ENCODE measurements at regions of chr6 and their contacts with region 1.

Region 1: GRCh38 chr6:110682460-110682853 is 132.8 kb downstream of the CDK19 start:
- DNase-seq: peak; percentile 87
- H3K4me3 Mint-ChIP-seq: no peak overlapping the region
- H3K27ac Mint-ChIP-seq: no peak overlapping the region
- H3K4me1 Mint-ChIP-seq: no peaks in the 10 kb centered on the region
- H3K27me3 Mint-ChIP-seq: no peaks in the 10 kb centered on the region
- CTCF ChIP-seq: peak; percentile 74

Region 2: GRCh38 chr6:110671116-110671846 is 11.2 kb before region 1 on chr6:
- CTCF ChIA-PET with region 1: interaction called, 10 read pairs
- POLR2A ChIA-PET with region 1: no interaction called
- intact Hi-C with region 1: no loop called
- DNase-seq: no peak
- H3K4me3 Mint-ChIP-seq: no peak overlapping the region
- H3K27ac Mint-ChIP-seq: no peak overlapping the region
- H3K4me1 Mint-ChIP-seq: peaks cover 4% of the 10 kb centered on the region
- H3K27me3 Mint-ChIP-seq: no peaks in the 10 kb centered on the region
- CTCF ChIP-seq: no peak

Region 3: DNA sequence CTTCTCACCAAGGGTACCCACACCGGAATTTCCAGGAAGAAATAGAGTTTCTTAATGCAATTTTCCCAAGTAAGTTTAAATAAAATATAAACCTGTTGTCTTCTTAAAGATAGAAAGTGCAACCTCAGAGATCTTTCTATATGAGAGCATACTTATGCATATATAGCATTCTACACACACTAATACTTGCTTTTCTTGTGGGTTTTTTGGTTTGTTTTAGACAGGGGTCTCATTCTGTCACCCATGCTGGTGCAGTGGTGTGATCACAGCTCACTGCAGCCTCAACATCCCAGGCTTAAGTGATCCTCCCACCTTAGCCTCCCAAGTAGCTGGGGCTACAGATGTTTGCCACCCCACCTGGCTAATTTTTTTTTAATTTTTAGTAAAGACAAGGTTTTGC is 207.8 kb after region 1 on chr6:
- CTCF ChIA-PET with region 1: interaction called, 12 read pairs
- POLR2A ChIA-PET with region 1: no interaction called
- intact Hi-C with region 1: no loop called
- DNase-seq: no peak
- H3K4me3 Mint-ChIP-seq: no peak overlapping the region
- H3K27ac Mint-ChIP-seq: no peak overlapping the region
- H3K4me1 Mint-ChIP-seq: peaks cover 6% of the 10 kb centered on the region
- H3K27me3 Mint-ChIP-seq: no peaks in the 10 kb centered on the region
- CTCF ChIP-seq: no peak

Region 4: GRCh38 chr6:110949679-110950285 is 267.3 kb after region 1 on chr6:
- CTCF ChIA-PET with region 1: interaction called, 123 read pairs
- POLR2A ChIA-PET with region 1: interaction called, 5 read pairs
- intact Hi-C with region 1: loop called (anchors 1 kb)
- DNase-seq: peak; percentile 33
- H3K4me3 Mint-ChIP-seq: no peak overlapping the region
- H3K27ac Mint-ChIP-seq: no peak overlapping the region
- H3K4me1 Mint-ChIP-seq: peaks cover 16% of the 10 kb centered on the region
- H3K27me3 Mint-ChIP-seq: no peaks in the 10 kb centered on the region
- CTCF ChIP-seq: peak; percentile 46

Region 5: DNA sequence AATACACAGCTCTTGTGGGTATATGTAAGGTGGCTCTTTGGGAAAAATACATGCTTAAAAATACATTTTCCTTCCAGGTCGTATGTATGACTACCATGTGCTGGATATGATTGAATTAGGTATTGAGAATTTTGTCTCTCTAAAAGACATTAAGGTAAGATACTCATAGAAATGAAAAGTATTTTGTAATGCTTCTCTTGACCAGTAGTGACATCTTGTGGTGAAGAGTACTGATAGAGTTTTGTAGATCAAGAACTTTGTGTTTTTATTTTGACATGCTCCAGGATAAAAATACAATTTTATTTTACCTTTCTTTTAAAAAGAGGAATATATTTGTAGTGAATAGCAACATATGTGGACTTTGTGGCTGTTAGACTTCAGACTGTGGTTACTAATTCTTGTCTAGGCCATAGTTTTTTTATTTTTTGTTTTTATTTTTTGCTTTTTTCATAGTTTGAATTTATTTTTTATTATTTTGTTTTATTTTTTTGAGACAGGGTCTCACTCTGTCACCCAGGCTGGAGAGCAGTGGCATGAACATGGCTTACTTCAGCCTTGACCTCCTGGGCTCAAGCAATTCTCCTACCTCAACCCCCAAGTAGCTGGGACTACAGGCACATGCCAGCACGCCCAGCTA is 317.3 kb after region 1 on chr6:
- CTCF ChIA-PET with region 1: no interaction called
- POLR2A ChIA-PET with region 1: no interaction called
- intact Hi-C with region 1: loop called (anchors 5 kb)
- DNase-seq: peak; percentile 35
- H3K4me3 Mint-ChIP-seq: no peak overlapping the region
- H3K27ac Mint-ChIP-seq: no peak overlapping the region
- H3K4me1 Mint-ChIP-seq: no peaks in the 10 kb centered on the region
- H3K27me3 Mint-ChIP-seq: no peaks in the 10 kb centered on the region
- CTCF ChIP-seq: peak; percentile 49

Measured in MCF 10A (cell line).